ENCODE measurements at regions of chr1 and their contacts with region 1.

Region 1: GRCh38 chr1:212070720-212071302 is 35.3 kb downstream of the DTL start:
- DNase-seq: peak; percentile 59 to 69 (median 66)
- H3K4me3 ChIP-seq: no peak overlapping the region
- H3K27ac ChIP-seq: no peak overlapping the region
- H3K4me1 ChIP-seq: peaks cover 0 to 7% (median 0%) of the 10 kb centered on the region in 4 experiments
- H3K27me3 ChIP-seq: no peaks in the 10 kb centered on the region

Region 2: GRCh38 chr1:211896958-211897357 is 173.9 kb before region 1 on chr1:
- CTCF ChIA-PET with region 1: no interaction called
- POLR2A ChIA-PET with region 1: no interaction called
- DNase-seq: no peak
- H3K4me3 ChIP-seq: no peak overlapping the region
- H3K27ac ChIP-seq: no peak overlapping the region
- H3K4me1 ChIP-seq: no peaks in the 10 kb centered on the region
- H3K27me3 ChIP-seq: no peaks in the 10 kb centered on the region

Region 3: GRCh38 chr1:212089560-212090163 is 18.9 kb after region 1 on chr1:
- CTCF ChIA-PET with region 1: interaction called, 16 read pairs
- POLR2A ChIA-PET with region 1: no interaction called
- DNase-seq: peak in 1 of 3 donors; percentile 24
- H3K4me3 ChIP-seq: peak overlapping the region in 1 of 7 experiments; percentile 29
- H3K27ac ChIP-seq: no peak overlapping the region
- H3K4me1 ChIP-seq: peaks cover 10 to 19% (median 15%) of the 10 kb centered on the region in 4 experiments
- H3K27me3 ChIP-seq: no peaks in the 10 kb centered on the region

Region 4: GRCh38 chr1:212284744-212285684 is 214.2 kb after region 1 on chr1 and contains the start of gene PPP2R5A:
- CTCF ChIA-PET with region 1: interaction called, 111 read pairs
- POLR2A ChIA-PET with region 1: no interaction called
- DNase-seq: peak; percentile 100
- H3K4me3 ChIP-seq: peak within 1 kb of the TSS; percentile 74 to 100 (median 99)
- H3K27ac ChIP-seq: peak within 1 kb of the TSS; percentile 59 to 91
- H3K4me1 ChIP-seq: peaks cover 25 to 45% (median 33%) of the 10 kb centered on the region in 4 experiments
- H3K27me3 ChIP-seq: no peaks in the 10 kb centered on the region

Region 5: DNA sequence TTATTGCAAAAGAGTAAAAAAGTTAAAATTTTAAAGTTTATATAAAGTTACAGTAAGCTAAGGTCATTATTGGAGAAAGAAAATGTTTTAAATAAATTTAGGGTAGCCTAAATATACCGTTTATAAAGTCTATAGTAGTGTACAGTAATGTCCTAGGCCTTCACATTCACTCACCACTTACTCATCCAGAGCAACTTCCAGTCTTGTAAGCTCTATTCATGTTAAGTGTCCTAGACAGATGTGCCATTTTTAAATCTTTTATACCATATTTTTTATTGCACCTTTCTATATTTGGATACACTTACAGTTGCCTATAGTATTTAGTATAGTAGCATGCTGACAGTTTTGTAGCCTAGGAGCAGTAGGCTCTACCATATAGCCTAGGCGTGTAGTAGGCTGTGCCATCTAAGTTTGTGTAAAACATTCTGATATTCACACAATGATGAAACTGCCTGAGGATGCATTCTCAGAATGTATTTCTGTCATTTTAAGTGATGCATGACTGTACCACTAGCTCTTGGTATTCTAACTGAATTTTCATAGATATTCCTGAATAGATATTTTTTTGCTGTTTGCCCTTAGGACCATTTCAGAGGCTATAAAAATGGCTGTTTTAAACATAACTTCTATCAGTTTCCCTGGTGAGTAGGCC is 241.2 kb after region 1 on chr1:
- CTCF ChIA-PET with region 1: interaction called, 11 read pairs
- POLR2A ChIA-PET with region 1: no interaction called
- DNase-seq: no peak
- H3K4me3 ChIP-seq: no peak overlapping the region
- H3K27ac ChIP-seq: no peak overlapping the region
- H3K4me1 ChIP-seq: no peaks in the 10 kb centered on the region
- H3K27me3 ChIP-seq: no peaks in the 10 kb centered on the region

Measured in common myeloid progenitor, CD34-positive (primary cell).